ENCODE measurements at regions of chr15 and their contacts with region 1.

Region 1: DNA sequence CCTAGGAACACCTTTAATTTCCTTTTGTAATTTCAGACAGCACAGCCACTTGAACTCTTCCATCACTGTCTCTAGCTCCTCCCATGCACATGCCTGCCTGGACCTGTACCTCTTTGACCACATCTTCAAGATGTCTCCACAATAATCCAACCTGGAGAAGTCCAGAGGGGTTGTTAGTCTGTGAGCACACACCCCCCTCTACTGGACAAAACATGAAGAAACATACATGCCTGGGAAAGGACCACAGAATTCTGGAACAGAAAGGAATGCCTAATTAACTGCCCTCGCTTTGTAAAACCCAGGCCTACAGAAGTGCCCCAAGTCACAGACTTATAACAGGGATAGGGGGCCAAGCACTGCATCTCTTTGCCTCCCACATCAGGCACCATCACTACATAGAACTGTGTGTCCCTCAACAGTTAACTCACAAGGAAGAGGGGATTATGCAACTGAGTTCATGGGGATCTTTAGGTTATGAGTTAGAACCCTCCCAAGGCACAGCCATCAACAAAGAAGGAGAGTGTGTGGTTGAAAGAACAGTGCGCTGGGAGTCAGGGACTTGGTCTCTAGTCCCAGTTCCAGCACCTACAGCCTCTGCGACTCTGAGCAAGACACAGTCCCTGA is 61.7 kb downstream of the FMN1 start:
- DNase-seq: no peak
- H3K4me3 ChIP-seq: no peak overlapping the region
- H3K27ac ChIP-seq: no peak overlapping the region
- H3K4me1 ChIP-seq: peaks cover 0 to 12% (median 0%) of the 10 kb centered on the region in 3 donors
- H3K27me3 ChIP-seq: peaks cover 0 to 20% (median 0%) of the 10 kb centered on the region in 4 donors
- CTCF ChIP-seq: peak in 5 of 6 experiments; percentile 67 to 80 (median 68)
- POLR2A ChIP-seq: no peak

Region 2: GRCh38 chr15:32844118-32844711 is 288.6 kb before region 1 on chr15:
- intact Hi-C with region 1: no loop called
- DNase-seq: no peak
- H3K4me3 ChIP-seq: no peak overlapping the region
- H3K27ac ChIP-seq: no peak overlapping the region
- H3K4me1 ChIP-seq: peaks cover 0 to 14% (median 0%) of the 10 kb centered on the region in 3 donors
- H3K27me3 ChIP-seq: no peaks in the 10 kb centered on the region
- CTCF ChIP-seq: peak; percentile 25 to 64 (median 48)
- POLR2A ChIP-seq: no peak

Region 3: DNA sequence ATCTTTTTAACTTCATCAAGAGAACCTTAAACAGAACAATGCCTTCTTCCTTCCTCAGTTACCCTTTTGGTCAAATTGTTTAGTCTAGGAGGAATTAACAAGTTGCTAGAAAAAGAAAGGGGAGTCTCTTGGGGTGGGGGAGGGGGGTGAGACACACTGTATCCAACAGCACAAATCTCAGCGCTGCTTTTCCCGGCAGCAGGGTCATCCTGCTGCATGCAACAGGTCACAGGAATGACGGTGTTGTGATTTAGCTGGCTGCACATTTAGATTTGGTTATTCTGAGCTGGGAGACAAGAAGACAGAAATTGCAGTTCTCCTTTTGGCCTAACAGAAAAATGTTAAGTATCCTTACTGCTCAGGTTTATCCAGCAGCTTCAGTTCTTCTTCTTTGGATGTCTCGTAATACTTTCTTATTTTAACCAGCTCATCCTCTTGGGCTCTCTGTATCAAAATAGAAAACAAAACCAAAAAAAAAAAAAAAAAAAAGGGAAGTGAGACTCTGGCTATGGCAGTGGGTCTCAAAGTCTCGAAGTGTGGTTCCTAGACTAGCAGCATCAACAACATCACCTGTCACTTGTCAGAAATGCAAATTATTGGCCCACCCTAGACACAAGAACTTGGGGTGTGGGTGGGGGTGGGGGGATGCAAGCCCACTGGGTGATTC is 224.6 kb before region 1 on chr15:
- intact Hi-C with region 1: no loop called
- DNase-seq: no peak
- H3K4me3 ChIP-seq: no peak overlapping the region
- H3K27ac ChIP-seq: peak overlapping the region in 2 of 4 donors; percentile 22 to 77
- H3K4me1 ChIP-seq: peaks cover 0 to 12% (median 5%) of the 10 kb centered on the region in 3 donors
- H3K27me3 ChIP-seq: no peaks in the 10 kb centered on the region
- CTCF ChIP-seq: no peak
- POLR2A ChIP-seq: no peak

Region 4: GRCh38 chr15:33031324-33031821 is 101.5 kb before region 1 on chr15:
- intact Hi-C with region 1: loop called (anchors 10 kb)
- DNase-seq: no peak
- H3K4me3 ChIP-seq: no peak overlapping the region
- H3K27ac ChIP-seq: no peak overlapping the region
- H3K4me1 ChIP-seq: peaks cover 0 to 25% (median 0%) of the 10 kb centered on the region in 3 donors
- H3K27me3 ChIP-seq: no peaks in the 10 kb centered on the region
- CTCF ChIP-seq: no peak
- POLR2A ChIP-seq: no peak

Region 5: DNA sequence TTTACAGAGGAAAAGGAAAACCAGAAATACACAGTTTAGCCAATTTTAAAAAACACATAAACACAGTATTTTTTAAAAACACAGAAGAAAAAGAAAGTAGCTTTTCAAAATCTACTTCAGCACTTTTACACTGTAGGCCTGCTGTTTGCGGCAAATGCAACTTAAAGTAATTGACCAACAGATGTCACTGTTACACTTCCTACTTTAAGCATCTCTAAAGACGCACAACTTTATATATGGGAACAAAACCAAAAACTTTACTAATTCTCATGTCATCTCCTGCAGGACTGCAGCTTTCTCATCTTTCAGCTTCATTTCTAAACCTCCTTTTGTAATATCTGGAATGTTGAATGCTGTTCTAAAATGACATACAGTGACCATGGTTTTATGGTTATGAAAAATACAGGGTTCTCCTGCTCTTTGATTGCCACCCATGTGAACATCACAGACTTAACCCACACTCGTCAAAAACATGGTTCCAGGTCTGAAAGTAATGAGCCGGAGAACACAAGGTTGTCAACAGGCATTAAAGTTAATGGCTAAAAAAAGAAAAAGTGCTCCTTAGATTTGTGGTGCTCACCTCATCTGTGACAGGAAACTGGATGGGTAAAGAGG is 46.2 kb before region 1 on chr15:
- intact Hi-C with region 1: loop called (anchors 10 kb)
- DNase-seq: no peak
- H3K4me3 ChIP-seq: no peak overlapping the region
- H3K27ac ChIP-seq: no peak overlapping the region
- H3K4me1 ChIP-seq: peaks cover 9 to 33% (median 16%) of the 10 kb centered on the region in 3 donors
- H3K27me3 ChIP-seq: peaks cover 0 to 3% (median 0%) of the 10 kb centered on the region in 4 donors
- CTCF ChIP-seq: peak in 5 of 6 experiments; percentile 36 to 64 (median 40)
- POLR2A ChIP-seq: no peak

Region 6: GRCh38 chr15:33242669-33243191 is 109.9 kb after region 1 on chr15:
- intact Hi-C with region 1: no loop called
- DNase-seq: no peak
- H3K4me3 ChIP-seq: no peak overlapping the region
- H3K27ac ChIP-seq: no peak overlapping the region
- H3K4me1 ChIP-seq: no peaks in the 10 kb centered on the region
- H3K27me3 ChIP-seq: peaks cover 0 to 17% (median 0%) of the 10 kb centered on the region in 4 donors
- CTCF ChIP-seq: peak in 2 of 6 experiments; percentile 19 to 44
- POLR2A ChIP-seq: no peak